GM13977 (cell line): ENCODE measurements at regions of chr7 and their contacts with region 1.

Region 1: GRCh38 chr7:94436018-94436604 is 41.4 kb downstream of the COL1A2 start:
- DNase-seq: peak; percentile 31
- CTCF ChIP-seq: peak; percentile 86

Region 2: GRCh38 chr7:94547126-94547525 is 111.0 kb after region 1 on chr7:
- in situ Hi-C with region 1: no loop called
- DNase-seq: no peak
- CTCF ChIP-seq: no peak

Region 3: GRCh38 chr7:95199779-95200558 is 763.9 kb after region 1 on chr7:
- in situ Hi-C with region 1: loop called (anchors 25 kb)
- DNase-seq: peak; percentile 35
- CTCF ChIP-seq: peak; percentile 57

Region 4: GRCh38 chr7:95476904-95477594 is 1040.9 kb after region 1 on chr7:
- in situ Hi-C with region 1: loop called (anchors 25 kb)
- DNase-seq: peak; percentile 21
- CTCF ChIP-seq: peak; percentile 78